GM18951 (cell line): ENCODE measurements at regions of chr18 and their contacts with region 1.

Region 1: GRCh38 chr18:77650799-77651385 is 401.2 kb downstream of the GALR1 start:
- POLR2A ChIP-seq: no peak

Region 2: DNA sequence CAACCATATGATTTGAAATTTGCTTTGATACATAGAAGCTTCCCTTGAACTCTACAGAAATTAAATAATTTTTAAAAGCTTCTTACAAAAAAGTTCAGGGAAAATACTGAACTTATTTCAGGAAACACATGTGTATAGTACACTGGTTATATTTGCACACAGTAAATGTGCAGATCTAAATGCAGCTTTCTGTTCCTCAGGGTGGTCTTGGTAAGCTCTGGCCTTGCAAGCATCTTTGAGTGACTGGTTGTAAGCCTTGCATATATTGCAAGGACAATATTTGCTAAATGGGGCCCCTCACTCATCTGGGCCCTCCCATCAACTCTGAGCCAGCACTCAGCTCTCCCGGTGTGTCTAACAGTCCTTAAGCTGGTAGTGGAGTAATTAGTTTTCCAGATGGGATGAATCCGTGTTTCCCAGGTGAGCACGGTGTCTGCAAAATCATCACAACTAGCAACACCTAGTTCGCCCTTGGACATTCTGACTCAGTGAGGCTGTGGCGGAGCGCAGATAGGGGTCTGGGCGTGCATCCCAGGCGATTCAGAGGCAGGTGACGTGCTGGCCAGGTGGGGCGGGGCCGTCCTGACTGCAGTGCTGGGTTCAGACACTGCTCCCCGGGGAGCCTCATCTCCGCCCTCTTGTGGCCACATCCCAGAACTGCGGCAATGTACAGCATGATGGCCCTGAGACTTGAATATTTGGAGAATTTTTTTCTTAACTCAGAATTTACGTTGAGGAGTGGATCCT is 667.9 kb before region 1 on chr18:
- in situ Hi-C with region 1: loop called (anchors 25 kb)
- POLR2A ChIP-seq: no peak